ENCODE measurements at regions of chr12 and their contacts with region 1.

Region 1: GRCh38 chr12:123633379-123634141 is at the starts of genes EIF2B1 and GTF2H3:
- DNase-seq: peak; percentile 97
- H3K4me3 ChIP-seq: peak within 1 kb of the TSS; percentile 97
- H3K4me3 Mint-ChIP-seq: peak within 1 kb of the TSS; percentile 99
- H3K27ac Mint-ChIP-seq: peak within 1 kb of the TSS; percentile 100
- H3K4me1 ChIP-seq: no peaks in the 10 kb centered on the region
- H3K4me1 Mint-ChIP-seq: peaks cover 9% of the 10 kb centered on the region
- H3K27me3 ChIP-seq: no peaks in the 10 kb centered on the region
- H3K27me3 Mint-ChIP-seq: no peaks in the 10 kb centered on the region
- CTCF ChIP-seq: no peak
- total RNA-seq, gene EIF2B1: 56.2 and 62.1 TPM in 2 replicates
- total RNA-seq, gene GTF2H3: 44.8 and 45.6 TPM in 2 replicates

Region 2: DNA sequence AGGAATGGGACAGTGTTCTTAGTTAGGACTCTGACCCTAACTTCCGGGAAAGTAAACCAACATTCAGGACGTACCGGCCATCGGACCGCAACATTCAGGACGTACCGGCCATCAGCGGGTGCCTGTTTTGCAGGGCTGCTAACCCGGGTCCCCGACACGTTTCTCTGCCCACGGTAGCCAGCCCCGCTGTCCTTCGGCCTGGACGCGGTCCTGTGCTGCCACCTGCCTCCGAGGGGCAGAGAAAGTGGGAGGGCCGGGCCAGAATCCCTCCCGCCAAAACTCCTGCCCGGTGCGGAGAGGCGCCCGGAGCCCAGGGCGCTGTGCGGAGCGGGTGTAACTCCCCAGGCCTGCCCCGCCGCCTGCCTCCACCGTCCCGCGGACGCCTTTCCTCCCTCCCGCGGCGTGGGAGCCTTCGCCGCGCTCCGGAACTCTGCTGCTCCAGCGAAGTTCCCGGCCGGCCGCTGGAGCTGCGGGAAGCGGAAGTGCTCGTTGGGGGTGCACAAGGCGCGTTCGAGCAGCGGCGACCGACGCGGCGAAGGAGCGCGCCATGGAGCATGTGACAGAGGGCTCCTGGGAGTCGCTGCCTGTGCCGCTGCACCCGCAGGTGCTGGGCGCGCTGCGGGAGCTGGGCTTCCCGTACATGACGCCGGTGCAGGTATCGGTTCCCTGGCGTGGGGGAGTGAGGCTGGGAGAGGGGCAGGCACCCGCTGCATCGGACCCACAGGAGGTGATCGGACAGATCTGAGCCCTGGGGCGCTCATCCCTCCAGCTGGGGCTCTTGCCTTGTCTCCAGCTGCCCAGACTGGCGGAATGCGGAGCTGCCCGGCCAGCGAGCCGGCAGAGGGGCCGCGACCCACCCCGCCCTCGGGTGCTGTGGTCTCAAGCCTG is 31.7 kb before region 1 on chr12 and contains the start of gene DDX55:
- CTCF ChIA-PET with region 1: no interaction called
- POLR2A ChIA-PET with region 1: no interaction called
- intact Hi-C with region 1: loop called (anchors 1 kb)
- DNase-seq: peak; percentile 82 to 87
- H3K4me3 ChIP-seq: peak within 1 kb of the TSS; percentile 98
- H3K4me3 Mint-ChIP-seq: peak within 1 kb of the TSS; percentile 85
- H3K27ac Mint-ChIP-seq: peak within 1 kb of the TSS; percentile 94
- H3K4me1 ChIP-seq: peaks cover 4% of the 10 kb centered on the region; the same call in 1 of the 2 replicates
- H3K4me1 Mint-ChIP-seq: peaks cover 16% of the 10 kb centered on the region
- H3K27me3 ChIP-seq: no peaks in the 10 kb centered on the region
- H3K27me3 Mint-ChIP-seq: no peaks in the 10 kb centered on the region
- CTCF ChIP-seq: peak; percentile 39 to 43
- total RNA-seq, gene DDX55: 45.4 and 46.3 TPM in 2 replicates

Region 3: DNA sequence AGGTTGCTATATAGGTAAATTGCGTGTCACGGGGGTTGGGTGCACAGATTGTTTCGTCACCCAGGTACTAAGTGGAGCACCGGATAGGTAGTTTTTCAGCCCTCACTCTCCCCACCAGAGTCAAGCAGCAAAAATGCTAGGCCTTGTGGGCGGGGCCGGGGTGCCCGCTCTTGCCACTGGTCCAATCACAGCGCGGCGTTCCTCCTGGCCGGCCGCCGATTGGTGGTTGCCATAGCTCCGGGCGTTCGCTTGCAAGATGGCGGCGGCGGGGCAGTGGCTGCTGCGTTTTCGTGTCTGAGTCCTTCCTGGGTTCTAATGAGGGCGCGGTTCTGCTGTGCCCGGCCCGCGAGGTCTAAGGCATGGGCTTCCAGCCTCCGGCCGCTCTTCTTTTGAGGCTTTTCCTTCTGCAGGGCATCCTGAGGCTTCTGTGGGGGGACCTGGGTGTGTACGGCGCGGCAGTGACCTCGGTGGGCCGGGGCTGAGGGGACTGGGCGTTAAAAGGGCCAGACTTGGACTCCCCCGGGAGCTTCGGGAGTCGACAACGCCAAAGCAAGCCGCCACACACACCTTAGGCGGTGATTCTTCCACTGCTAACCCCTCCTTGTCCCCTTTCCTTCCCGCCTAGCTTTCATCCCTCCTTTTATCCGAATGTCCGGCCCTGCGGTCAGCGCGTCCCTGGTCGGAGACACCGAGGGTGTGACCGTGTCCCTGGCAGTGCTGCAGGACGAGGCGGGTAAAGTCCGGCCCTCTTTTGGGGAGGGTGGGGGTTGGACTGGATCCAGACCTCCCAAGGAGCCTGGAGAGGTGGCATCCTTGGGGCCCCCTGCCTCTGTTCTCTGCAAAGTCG is 37.5 kb after region 1 on chr12 and contains the start of gene TCTN2:
- CTCF ChIA-PET with region 1: no interaction called
- POLR2A ChIA-PET with region 1: no interaction called
- intact Hi-C with region 1: loop called (anchors 5 kb)
- DNase-seq: peak; percentile 94 to 95
- H3K4me3 ChIP-seq: peak within 1 kb of the TSS; percentile 92
- H3K4me3 Mint-ChIP-seq: peak within 1 kb of the TSS; percentile 80
- H3K27ac Mint-ChIP-seq: peak within 1 kb of the TSS; percentile 57
- H3K4me1 ChIP-seq: no peaks in the 10 kb centered on the region
- H3K4me1 Mint-ChIP-seq: peaks cover 8% of the 10 kb centered on the region
- H3K27me3 ChIP-seq: no peaks in the 10 kb centered on the region
- H3K27me3 Mint-ChIP-seq: no peaks in the 10 kb centered on the region
- CTCF ChIP-seq: no peak
- total RNA-seq, gene TCTN2: 7.3 TPM in 2 replicates

Region 4: DNA sequence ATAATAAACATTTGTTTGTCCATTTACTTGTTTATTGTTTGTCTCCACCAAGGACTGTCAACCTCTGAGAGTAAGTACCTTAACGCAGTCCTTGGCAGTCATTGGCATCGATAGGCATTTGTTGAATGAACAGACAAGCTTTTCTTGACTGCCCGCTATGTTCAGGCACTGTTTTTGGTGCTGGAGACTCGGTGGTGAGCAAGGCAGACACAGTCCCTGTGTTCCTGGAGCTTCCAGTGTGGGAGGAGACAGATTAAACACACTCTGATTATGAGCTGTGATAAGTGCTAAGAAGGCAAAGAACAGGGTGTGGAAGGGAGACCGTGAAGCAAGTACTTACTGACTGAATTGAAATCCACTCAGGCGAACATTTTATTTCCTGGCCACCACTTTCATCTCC is 79.8 kb after region 1 on chr12:
- CTCF ChIA-PET with region 1: no interaction called
- POLR2A ChIA-PET with region 1: no interaction called
- intact Hi-C with region 1: loop called (anchors 5 kb)
- DNase-seq: peak in 1 of 2 experiments; percentile 9
- H3K4me3 ChIP-seq: peak overlapping the region; percentile 99
- H3K4me3 Mint-ChIP-seq: peak overlapping the region; percentile 81
- H3K27ac Mint-ChIP-seq: peak overlapping the region; percentile 7
- H3K4me1 ChIP-seq: peaks cover 9% of the 10 kb centered on the region
- H3K4me1 Mint-ChIP-seq: peaks cover 9% of the 10 kb centered on the region
- H3K27me3 ChIP-seq: no peaks in the 10 kb centered on the region
- H3K27me3 Mint-ChIP-seq: no peaks in the 10 kb centered on the region
- CTCF ChIP-seq: no peak

Measured in Caco-2 (cell line).